ENCODE measurements at regions of chr17 and their contacts with region 1.

Region 1: DNA sequence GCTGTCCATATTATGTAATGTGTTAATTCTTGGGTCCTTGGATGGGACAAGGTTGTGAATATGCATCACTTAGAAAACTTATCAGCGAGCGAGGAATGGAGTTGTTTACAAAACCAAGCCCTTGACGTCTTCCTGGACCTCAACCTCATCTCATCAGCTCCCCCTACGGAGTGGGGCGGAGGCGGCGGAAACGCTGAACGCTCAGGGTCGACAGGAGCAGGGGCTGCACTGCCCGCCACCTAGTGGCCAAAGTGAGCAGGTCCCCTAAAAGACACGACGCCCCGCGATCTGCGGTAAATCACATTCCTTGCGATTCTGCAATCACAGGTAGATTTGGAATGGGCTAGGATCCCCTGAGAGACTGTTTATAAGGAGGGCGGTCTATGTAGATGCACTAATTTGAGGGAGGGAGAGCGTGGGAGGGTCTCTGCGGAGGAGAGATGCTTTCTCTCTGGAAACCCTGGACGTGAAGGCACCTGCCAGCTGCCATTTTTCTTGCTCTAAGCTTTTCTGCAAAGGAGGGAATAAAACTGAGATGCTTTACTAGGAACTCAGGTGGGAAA is 5.4 kb upstream of the ICAM2 start:
- DNase-seq: peak; percentile 95
- ATAC-seq: peak; percentile 71
- H3K4me3 Mint-ChIP-seq: peak overlapping the region; percentile 58
- H3K27ac Mint-ChIP-seq: peak overlapping the region; percentile 89
- H3K4me1 Mint-ChIP-seq: peaks cover 62% of the 10 kb centered on the region
- H3K27me3 Mint-ChIP-seq: no peaks in the 10 kb centered on the region

Region 2: GRCh38 chr17:63295288-63295687 is 730.5 kb before region 1 on chr17:
- CTCF ChIA-PET with region 1: no interaction called
- POLR2A ChIA-PET with region 1: no interaction called
- intact Hi-C with region 1: no loop called
- DNase-seq: no peak
- ATAC-seq: no peak
- H3K4me3 Mint-ChIP-seq: no peak overlapping the region
- H3K27ac Mint-ChIP-seq: no peak overlapping the region
- H3K4me1 Mint-ChIP-seq: peaks cover 5% of the 10 kb centered on the region
- H3K27me3 Mint-ChIP-seq: no peaks in the 10 kb centered on the region

Region 3: DNA sequence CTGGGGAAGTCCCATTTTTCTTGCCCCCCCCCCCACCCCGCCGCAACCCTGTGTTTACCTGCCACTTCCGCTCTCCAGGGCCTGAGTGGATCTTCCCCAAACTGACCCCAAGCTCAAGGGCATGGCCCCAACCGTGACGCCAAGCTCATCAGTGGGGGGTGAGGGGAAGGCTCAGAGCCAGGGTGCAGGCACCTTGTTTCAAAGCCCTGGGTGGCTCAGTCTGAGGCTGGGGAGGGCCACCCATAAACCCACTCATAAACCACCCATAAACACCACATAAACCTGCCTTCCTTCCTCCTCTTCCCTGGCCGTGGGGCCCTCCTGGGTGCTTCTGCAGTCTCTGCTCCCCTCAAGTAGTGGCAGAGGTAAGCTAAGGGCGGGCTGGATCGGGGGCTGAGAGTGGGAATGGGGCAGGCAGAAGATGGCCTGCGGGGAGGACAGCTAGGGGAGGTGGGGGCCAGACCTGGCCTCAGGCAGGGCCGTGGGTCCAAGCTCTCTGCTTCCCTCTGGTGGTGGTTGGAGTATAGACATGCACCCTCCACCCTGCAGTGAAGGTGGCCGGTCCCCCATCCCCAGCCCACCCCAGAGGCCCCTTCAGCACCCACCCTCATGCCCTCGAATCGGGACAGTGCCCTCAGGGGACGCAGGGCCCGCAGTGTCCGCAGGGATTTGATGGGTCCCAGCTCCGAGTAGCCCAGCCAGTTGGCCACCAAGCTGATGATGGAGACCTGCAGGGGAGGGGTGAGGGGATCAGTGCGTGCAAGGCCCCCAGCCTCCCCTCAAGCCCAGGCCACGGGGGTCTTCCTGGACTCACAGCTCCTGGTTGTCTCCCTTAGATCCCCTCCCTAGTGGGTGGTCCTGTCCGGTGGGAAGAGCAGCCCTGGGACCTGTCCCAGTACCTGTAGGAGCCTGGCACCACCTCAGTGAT is 79.1 kb before region 1 on chr17:
- CTCF ChIA-PET with region 1: interaction called, 14 read pairs
- POLR2A ChIA-PET with region 1: no interaction called
- intact Hi-C with region 1: no loop called
- DNase-seq: peak; percentile 79
- ATAC-seq: peak; percentile 95
- H3K4me3 Mint-ChIP-seq: peak overlapping the region; percentile 21
- H3K27ac Mint-ChIP-seq: peak overlapping the region; percentile 65
- H3K4me1 Mint-ChIP-seq: peaks cover 13% of the 10 kb centered on the region
- H3K27me3 Mint-ChIP-seq: no peaks in the 10 kb centered on the region

Region 4: GRCh38 chr17:63998050-63998720 is 27.6 kb before region 1 on chr17 and contains the start of gene PRR29:
- CTCF ChIA-PET with region 1: interaction called, 37 read pairs
- POLR2A ChIA-PET with region 1: no interaction called
- intact Hi-C with region 1: loop called in 1 of 2 experiments (anchors 2 kb)
- DNase-seq: peak; percentile 84
- ATAC-seq: peak; percentile 76
- H3K4me3 Mint-ChIP-seq: peak within 1 kb of the TSS; percentile 80
- H3K27ac Mint-ChIP-seq: peak within 1 kb of the TSS; percentile 31
- H3K4me1 Mint-ChIP-seq: peaks cover 30% of the 10 kb centered on the region
- H3K27me3 Mint-ChIP-seq: no peaks in the 10 kb centered on the region
- total RNA-seq, gene PRR29: 1.0 to 1.5 TPM

Region 5: GRCh38 chr17:64041912-64042311 is 16.1 kb after region 1 on chr17:
- CTCF ChIA-PET with region 1: interaction called, 49 read pairs
- POLR2A ChIA-PET with region 1: interaction called, 3 read pairs
- intact Hi-C with region 1: no loop called
- DNase-seq: no peak
- ATAC-seq: no peak
- H3K4me3 Mint-ChIP-seq: no peak overlapping the region
- H3K27ac Mint-ChIP-seq: peak overlapping the region; percentile 44
- H3K4me1 Mint-ChIP-seq: peaks cover 8% of the 10 kb centered on the region
- H3K27me3 Mint-ChIP-seq: no peaks in the 10 kb centered on the region

Region 6: DNA sequence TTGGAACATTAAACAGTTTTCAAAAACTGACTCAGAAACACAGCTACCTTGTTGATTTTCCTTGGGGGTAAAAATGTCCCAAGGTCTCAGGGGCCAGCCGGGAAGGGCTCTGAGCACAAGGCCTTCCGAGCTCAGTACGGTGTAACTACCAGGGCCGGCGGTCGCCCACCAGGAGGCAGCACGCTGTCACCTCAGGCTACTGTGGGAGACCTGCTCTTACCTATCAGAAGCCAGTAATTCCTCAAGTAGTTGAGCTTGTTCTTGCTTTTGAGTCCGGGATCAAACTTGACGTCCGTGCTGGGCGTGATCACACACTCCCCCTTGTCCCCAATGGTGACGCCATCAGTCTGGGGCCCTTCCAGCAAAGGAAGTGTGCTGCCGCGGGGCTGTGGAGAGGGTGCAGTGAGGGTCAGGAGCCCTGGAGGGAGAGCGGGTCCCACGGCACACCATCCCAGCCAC is 38.0 kb after region 1 on chr17:
- CTCF ChIA-PET with region 1: interaction called, 31 read pairs
- POLR2A ChIA-PET with region 1: interaction called, 6 read pairs
- intact Hi-C with region 1: loop called (anchors 2 kb)
- DNase-seq: peak; percentile 84
- ATAC-seq: peak; percentile 45
- H3K4me3 Mint-ChIP-seq: peak overlapping the region; percentile 56
- H3K27ac Mint-ChIP-seq: peak overlapping the region; percentile 85
- H3K4me1 Mint-ChIP-seq: peaks cover 84% of the 10 kb centered on the region
- H3K27me3 Mint-ChIP-seq: no peaks in the 10 kb centered on the region

Region 7: DNA sequence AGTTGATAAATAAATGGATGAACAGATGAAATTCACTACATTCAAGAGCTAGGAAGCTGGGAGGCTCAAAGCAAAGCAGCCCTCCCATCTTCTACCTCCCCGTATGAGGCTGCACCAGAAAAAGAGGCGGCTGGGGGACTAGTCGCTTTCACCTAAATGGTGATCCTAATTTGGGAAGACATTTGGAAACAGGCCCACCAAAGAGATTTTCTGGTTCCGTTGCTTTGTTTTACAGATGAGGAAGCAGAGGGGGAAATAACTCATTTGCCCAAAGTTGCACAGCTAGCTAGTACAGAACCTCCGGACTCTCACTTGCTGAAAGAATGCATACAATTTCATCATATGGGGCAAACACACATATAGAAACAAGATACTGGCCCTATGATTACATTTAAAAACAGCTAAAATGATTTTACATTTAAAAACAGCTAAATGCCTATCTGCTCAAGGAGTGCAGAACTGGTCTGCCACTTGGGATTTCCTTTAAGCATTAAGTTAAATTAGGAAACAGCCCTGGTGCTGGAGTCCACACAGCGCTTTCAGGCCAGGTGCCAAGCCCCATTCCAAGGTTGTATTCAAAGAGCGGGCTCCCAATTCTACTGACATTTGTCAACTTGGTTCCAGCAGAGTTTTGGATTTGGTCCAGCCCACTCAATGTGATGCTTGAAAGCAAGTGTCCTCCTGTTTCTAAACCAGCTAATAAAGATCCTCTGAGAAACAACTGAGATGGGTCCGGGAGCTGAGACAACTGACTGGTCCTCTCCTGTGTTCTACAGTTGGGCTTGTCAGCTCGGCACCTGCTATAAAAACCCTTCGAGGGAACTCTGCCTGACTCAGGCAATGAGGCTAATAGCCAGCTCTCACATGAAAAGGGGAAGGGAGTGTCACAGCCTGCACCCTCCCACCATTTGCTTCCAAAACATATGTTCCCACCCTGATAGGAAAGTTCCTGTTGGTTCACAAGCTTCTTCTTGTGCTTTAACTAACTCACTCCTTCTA is 92.5 kb after region 1 on chr17:
- CTCF ChIA-PET with region 1: interaction called, 17 read pairs
- POLR2A ChIA-PET with region 1: interaction called, 3 read pairs
- intact Hi-C with region 1: no loop called
- DNase-seq: no peak
- ATAC-seq: no peak
- H3K4me3 Mint-ChIP-seq: no peak overlapping the region
- H3K27ac Mint-ChIP-seq: peak overlapping the region; percentile 83
- H3K4me1 Mint-ChIP-seq: peaks cover 82% of the 10 kb centered on the region
- H3K27me3 Mint-ChIP-seq: no peaks in the 10 kb centered on the region

Region 8: GRCh38 chr17:64291254-64291851 is 265.5 kb after region 1 on chr17:
- CTCF ChIA-PET with region 1: interaction called, 16 read pairs
- POLR2A ChIA-PET with region 1: no interaction called
- intact Hi-C with region 1: no loop called
- DNase-seq: peak; percentile 23
- ATAC-seq: no peak
- H3K4me3 Mint-ChIP-seq: no peak overlapping the region
- H3K27ac Mint-ChIP-seq: no peak overlapping the region
- H3K4me1 Mint-ChIP-seq: no peaks in the 10 kb centered on the region
- H3K27me3 Mint-ChIP-seq: no peaks in the 10 kb centered on the region